Aorta (tissue), 5 donors: ENCODE measurements at regions of chr6 and their contacts with region 1.

Region 1: GRCh38 chr6:157379656-157380454 is 1.1 kb upstream of the ZDHHC14 start:
- DNase-seq: peak; percentile 94 to 96
- ATAC-seq: peak; percentile 93
- H3K4me3 ChIP-seq: peak overlapping the region; percentile 84 to 86
- H3K27ac ChIP-seq: peak overlapping the region; percentile 85 to 88
- H3K4me1 ChIP-seq: peaks cover 0 to 1% of the 10 kb centered on the region in 2 donors
- H3K27me3 ChIP-seq: no peaks in the 10 kb centered on the region

Region 2: DNA sequence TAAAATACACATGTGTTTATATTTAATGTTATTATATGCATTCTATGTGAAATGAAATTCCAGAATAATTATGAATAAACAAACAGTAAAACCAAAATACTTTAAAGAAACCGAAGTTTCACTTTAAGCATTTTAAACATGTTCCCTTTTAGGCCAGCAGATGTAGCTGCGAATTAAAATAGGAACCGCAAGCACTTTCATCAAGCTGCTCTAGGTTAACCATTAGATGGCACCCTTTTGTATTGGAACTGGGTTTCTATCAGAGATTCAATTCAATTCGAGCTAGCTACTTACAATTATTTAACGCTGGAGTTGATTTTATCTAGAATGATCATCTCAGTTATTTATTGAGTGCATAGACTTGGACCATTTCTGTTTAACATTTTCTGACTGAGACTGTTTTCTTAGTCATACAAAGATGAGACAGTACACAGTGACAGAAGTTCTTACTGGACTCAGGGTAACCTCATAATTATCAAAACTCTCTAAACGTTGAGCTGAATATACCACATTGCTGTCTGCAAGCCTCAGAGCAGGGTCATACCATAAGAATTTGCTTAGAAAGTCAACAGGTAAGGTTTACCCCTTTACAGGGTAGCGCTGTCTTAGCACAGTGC is 65.0 kb before region 1 on chr6:
- intact Hi-C with region 1: loop called (anchors 2 to 5 kb)
- DNase-seq: no peak
- ATAC-seq: peak; percentile 81
- H3K4me3 ChIP-seq: no peak overlapping the region
- H3K27ac ChIP-seq: no peak overlapping the region
- H3K4me1 ChIP-seq: no peaks in the 10 kb centered on the region
- H3K27me3 ChIP-seq: no peaks in the 10 kb centered on the region

Region 3: GRCh38 chr6:157323255-157323965 is 56.4 kb before region 1 on chr6 and contains the start of gene TMEM242:
- intact Hi-C with region 1: loop called (anchors 2 to 5 kb)
- DNase-seq: peak; percentile 95 to 96
- ATAC-seq: peak; percentile 99
- H3K4me3 ChIP-seq: peak within 1 kb of the TSS; percentile 68 to 83
- H3K27ac ChIP-seq: peak within 1 kb of the TSS; percentile 12 to 82
- H3K4me1 ChIP-seq: peaks cover 0 to 6% of the 10 kb centered on the region in 2 donors
- H3K27me3 ChIP-seq: no peaks in the 10 kb centered on the region
- total RNA-seq, gene TMEM242: 13.1 to 17.5 TPM

Region 4: DNA sequence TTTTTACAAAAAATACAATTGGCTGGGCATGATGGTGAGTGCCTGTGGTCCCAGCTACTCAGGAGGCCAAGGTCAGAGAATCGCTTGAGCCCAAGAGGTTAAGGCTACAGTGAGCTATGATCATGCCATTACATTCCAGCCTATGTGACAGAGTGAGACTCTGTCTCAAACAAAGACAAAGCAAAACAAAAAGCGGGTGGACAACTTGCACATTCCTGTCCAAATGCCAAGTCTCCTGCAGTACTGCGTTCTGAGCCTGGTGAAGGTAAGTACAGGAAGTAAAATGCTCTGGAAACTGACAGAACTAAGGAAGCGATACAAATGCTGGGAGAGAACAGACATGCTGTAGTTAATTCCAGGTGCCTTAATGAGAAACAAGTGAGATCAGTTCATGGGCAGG is 36.1 kb before region 1 on chr6:
- intact Hi-C with region 1: no loop called
- DNase-seq: no peak
- ATAC-seq: no peak
- H3K4me3 ChIP-seq: no peak overlapping the region
- H3K27ac ChIP-seq: no peak overlapping the region
- H3K4me1 ChIP-seq: no peaks in the 10 kb centered on the region
- H3K27me3 ChIP-seq: no peaks in the 10 kb centered on the region

Region 5: DNA sequence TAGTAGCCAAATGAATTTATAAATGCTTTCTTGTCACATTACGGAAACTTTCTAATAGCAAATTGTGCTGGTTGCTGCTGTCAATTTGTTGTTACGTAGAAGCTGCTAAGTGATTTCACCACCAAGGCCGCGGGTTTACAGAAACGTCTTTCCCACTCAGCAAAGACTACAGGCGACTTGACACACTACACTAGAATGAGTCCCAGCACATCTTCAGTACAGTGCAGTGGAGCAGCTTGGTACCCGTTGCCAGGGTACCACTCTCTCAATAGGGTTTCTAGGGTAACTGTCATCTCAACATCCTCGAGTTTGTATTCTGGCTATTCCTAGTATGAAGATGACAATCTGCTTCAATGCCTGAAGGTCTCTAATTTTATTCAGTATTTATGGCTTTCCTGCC is 21.6 kb before region 1 on chr6:
- intact Hi-C with region 1: loop called in 1 of 2 experiments (anchors 2 kb)
- DNase-seq: no peak
- ATAC-seq: no peak
- H3K4me3 ChIP-seq: no peak overlapping the region
- H3K27ac ChIP-seq: no peak overlapping the region
- H3K4me1 ChIP-seq: peaks cover 0 to 5% of the 10 kb centered on the region in 2 donors
- H3K27me3 ChIP-seq: no peaks in the 10 kb centered on the region

Region 6: GRCh38 chr6:157456524-157457082 is 76.7 kb after region 1 on chr6:
- intact Hi-C with region 1: no loop called
- DNase-seq: no peak
- ATAC-seq: no peak
- H3K4me3 ChIP-seq: no peak overlapping the region
- H3K27ac ChIP-seq: no peak overlapping the region
- H3K4me1 ChIP-seq: no peaks in the 10 kb centered on the region
- H3K27me3 ChIP-seq: no peaks in the 10 kb centered on the region

Region 7: DNA sequence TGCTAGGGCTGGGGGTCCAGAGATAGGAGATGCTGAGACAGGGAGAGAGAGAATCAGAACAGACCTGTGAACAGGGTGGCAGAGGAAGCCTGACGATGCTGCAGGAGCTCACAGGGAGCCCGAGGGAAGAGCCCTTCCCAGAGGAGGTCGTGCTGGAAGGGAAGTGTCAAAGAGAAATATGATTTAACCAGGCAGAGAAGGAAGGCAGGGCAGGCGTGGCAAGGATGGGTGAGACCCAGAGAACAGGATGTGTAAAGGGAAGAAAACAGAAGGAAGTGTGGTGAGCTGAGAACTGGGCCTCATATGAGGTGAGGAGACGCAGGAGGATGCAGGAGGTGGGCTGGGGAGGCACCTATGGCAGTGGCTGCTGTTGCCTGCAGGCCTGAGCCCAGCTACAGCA is 106.7 kb after region 1 on chr6:
- intact Hi-C with region 1: no loop called
- DNase-seq: no peak
- ATAC-seq: no peak
- H3K4me3 ChIP-seq: no peak overlapping the region
- H3K27ac ChIP-seq: no peak overlapping the region
- H3K4me1 ChIP-seq: no peaks in the 10 kb centered on the region
- H3K27me3 ChIP-seq: no peaks in the 10 kb centered on the region

Region 8: GRCh38 chr6:157597446-157598312 is 217.8 kb after region 1 on chr6:
- intact Hi-C with region 1: loop called (anchors 10 kb)
- DNase-seq: peak; percentile 68 to 82
- ATAC-seq: peak; percentile 55
- H3K4me3 ChIP-seq: no peak overlapping the region
- H3K27ac ChIP-seq: no peak overlapping the region
- H3K4me1 ChIP-seq: no peaks in the 10 kb centered on the region
- H3K27me3 ChIP-seq: no peaks in the 10 kb centered on the region